Motor neuron (in vitro differentiated cells): ENCODE measurements at regions of chr3 and their contacts with region 1.

Region 1: GRCh38 chr3:185900226-185900625 is 37.6 kb downstream of the TRA2B start:
- ATAC-seq: peak; percentile 98 to 100 (median 100)
- H3K4me3 ChIP-seq: no peak overlapping the region
- H3K27ac ChIP-seq: no peak overlapping the region
- H3K4me1 ChIP-seq: no peaks in the 10 kb centered on the region

Region 2: DNA sequence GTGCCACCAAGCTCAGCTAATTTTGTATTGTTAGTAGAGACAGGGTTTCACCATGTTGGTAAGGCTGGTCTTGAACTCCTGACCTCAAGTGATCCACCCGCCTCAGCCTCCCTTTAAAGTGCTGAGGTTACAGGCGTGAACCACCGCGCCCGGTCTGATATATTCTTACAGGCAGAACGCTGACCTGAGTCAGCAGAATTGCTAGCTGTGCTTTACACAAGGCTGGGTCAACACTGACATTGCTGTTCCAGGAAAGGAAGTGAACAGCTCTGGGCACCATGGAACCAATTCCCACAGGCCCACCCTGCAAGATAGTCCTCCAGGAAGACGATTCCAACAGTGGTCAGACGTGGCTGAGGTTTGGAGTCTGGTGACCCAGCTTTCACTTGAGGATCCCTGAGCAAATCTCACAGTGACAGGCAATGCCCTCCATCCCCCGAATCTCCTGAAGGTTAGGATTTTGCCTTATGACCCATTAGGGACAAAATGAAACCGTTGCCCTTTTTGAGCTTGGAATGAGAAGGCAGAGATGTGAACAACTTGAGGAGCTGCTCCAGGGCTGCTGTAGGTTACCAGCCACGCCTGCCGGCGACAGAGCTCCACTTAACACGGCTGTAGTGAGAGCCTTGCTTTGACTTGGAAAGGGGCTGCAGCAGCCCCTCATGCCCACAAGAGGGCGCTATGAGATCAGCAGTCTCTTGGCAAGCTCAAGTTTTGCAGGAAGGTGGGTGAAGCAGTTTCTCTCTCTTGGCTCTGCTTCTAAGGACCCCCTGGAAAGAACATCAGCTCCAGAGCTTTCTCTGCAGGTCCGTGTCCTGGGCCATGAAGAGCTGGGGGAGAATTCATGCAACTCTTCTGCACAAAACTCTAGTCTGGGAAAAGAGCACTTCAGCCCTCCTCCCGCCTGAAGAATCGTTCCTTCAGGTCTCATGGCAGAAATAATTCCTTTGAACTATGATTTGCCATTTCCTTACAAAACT is 240.0 kb before region 1 on chr3:
- in situ Hi-C with region 1: loop called in 3 of 9 experiments (anchors 25 kb)
- ATAC-seq: peak; percentile 12 to 89 (median 76)
- H3K4me3 ChIP-seq: no peak overlapping the region
- H3K27ac ChIP-seq: no peak overlapping the region
- H3K4me1 ChIP-seq: no peaks in the 10 kb centered on the region

Region 3: DNA sequence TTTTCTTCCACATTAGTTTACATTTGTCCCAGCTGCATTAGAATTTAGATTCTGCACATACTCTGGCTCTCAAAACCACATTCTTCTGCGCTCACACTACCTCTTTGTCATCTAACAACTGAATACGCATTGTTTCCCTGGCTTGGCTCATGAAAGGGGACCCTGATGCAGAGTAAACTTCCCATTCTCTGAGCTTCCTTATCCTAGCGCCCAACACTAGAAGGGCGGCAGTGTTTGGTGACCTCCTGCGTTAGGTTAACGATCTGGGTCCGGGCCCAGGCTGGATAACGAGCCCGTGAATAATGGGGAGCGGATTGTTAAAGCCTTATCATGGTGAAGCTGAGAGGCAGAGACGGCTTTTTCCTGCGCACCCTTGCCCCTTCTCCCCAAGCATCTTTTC is 144.7 kb after region 1 on chr3:
- in situ Hi-C with region 1: no loop called
- ATAC-seq: peak in 5 of 8 experiments; percentile 72 to 95 (median 83)
- H3K4me3 ChIP-seq: no peak overlapping the region
- H3K27ac ChIP-seq: no peak overlapping the region
- H3K4me1 ChIP-seq: peaks cover 8 to 19% of the 10 kb centered on the region in 2 donors

Region 4: DNA sequence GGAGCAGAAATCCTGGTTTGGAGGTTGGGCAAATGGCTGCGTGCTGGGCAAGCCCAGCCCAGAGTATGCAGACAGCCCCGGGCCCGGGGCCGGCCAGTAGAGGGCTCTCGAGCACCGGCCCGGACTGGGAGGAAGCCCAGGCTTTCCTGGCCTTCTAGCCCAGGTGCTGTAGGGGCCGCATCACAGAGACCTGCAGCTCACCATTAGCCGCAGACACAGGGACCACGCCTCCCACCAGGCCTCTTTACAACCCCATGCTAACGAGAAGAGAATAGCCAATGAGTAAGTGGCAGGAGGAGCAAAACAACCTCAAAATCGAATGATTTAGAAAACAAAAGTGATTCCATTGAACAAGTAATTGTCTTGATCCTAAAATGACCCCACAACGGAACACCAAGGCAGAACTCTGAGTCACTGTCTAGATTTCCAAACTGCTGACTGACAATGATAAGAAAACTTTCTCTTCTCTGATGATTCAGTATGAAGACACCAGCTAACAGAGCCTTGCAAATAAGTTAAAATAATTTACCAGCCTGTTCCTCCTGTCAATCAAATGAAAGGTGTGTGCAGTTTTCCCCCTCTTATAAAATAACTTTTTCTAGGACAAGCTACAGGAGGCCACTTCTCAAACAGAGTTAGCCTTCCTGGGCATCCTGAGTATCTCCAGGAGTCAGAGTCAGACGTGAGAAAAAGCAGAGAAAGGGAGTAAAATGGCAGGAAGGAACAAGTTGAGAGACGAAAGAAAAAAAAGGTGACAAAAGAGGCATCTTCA is 359.6 kb after region 1 on chr3:
- in situ Hi-C with region 1: no loop called
- ATAC-seq: peak; percentile 93 to 100 (median 100)
- H3K4me3 ChIP-seq: no peak overlapping the region
- H3K27ac ChIP-seq: no peak overlapping the region
- H3K4me1 ChIP-seq: peaks cover 0 to 6% of the 10 kb centered on the region in 2 donors